Right ventricle myocardium superior (tissue), 1 donor: ENCODE measurements at regions of chr15 and their contacts with region 1.

Region 1: DNA sequence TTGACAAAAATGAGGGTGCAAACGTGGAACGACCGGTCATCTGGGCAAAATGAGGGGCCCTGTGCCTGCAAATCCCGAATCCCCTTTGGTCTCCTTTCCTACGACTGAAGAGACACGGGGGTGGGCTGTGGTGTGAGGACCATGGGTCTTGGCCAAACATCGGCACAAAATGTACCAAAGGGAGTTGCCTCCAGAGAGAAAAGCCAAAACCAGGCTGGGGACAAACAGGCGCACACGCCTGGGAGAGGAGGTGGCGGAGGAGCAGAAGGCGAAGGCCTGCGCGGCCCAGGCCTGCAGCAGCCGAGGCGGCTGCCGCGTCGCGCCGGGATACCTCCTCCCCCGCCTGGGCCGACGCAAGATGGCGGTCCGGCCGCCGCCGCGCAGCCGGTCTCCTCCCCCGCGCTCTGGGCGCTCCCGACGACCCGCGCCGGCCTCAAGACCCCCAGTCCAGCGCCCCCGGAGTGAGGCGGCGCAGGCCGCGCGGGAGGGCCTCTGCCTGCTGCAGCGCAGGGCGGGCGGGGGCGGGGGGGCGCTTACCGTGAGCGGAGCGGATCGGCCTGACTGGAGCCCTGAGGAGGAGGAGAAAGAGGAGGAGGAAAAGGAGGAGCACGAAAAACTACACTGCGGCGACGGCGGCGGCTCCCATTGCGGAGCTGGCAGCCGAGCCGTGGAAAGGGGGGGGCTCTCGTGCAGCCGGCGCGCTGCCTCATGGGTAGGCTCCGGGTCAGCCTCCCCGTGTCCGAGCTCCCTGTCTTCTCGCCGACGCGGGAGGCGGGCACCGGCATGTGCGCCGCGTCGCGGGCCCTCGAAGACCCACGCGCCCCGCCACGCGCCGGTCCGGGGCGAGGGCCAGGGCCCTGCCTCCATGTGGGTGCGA is at the start of gene ZNF280D:
- DNase-seq: peak; percentile 95
- ATAC-seq: peak; percentile 95
- total RNA-seq, gene ZNF280D: 21.1 TPM

Region 2: GRCh38 chr15:56886932-56887781 is 154.0 kb after region 1 on chr15:
- intact Hi-C with region 1: loop called (anchors 10 kb)
- DNase-seq: peak; percentile 96
- ATAC-seq: peak; percentile 99

Region 3: GRCh38 chr15:56984681-56985481 is 251.7 kb after region 1 on chr15:
- intact Hi-C with region 1: no loop called
- DNase-seq: no peak
- ATAC-seq: peak; percentile 53